PC-3 (cell line): ENCODE measurements at regions of chr21 and their contacts with region 1.

Region 1: GRCh38 chr21:33931799-33932390 is 16.3 kb upstream of the ATP5PO start:
- DNase-seq: peak; percentile 25
- ATAC-seq: peak; percentile 69
- H3K4me3 ChIP-seq: peak overlapping the region; percentile 88
- H3K27ac ChIP-seq: peak overlapping the region; percentile 86
- H3K4me1 ChIP-seq: peaks cover 13% of the 10 kb centered on the region
- H3K27me3 ChIP-seq: no peaks in the 10 kb centered on the region
- CTCF ChIP-seq: no peak

Region 2: DNA sequence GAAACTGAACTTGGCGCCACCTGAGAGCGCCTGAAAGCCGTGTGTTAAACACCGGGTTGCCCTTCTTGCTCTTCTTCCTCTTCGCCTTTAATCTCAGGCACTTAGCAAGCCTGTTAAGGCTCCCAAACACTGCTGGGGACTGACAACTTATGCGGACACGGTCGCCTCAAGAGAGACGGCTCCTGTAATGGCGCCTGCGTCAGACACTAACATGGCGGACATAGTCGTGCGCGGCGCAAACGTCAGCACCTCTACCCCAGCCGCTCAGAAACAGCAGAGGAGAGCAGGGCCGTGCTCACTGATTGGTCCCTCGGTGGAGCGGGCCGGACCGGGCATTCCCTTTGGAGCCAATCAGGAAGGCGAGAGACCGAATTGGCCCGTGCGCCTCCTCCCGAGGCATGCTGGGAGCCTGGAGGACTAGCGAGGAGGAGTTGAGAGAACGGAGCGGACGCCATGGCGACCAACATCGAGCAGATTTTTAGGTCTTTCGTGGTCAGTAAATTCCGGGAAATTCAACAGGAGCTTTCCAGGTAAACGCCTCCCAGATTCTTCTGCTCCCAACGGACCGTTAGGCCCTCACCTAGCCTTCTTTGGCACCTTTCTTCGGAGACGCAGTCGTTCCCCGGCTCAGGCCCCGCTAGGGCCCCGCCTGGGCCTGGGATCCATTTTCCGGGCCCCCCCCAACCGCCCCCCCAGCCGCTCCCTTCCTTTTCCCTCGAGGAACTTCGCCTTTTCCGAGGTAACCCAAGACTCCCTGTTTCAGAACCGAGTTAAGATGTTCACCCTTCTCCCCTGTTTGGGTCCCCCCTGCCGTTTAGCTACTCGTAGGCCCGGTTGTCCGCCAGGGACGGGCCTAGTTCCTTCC is 389.0 kb before region 1 on chr21 and contains the start of gene SON:
- CTCF ChIA-PET with region 1: no interaction called
- POLR2A ChIA-PET with region 1: no interaction called
- intact Hi-C with region 1: no loop called
- DNase-seq: peak; percentile 99
- ATAC-seq: peak; percentile 95
- H3K4me3 ChIP-seq: peak within 1 kb of the TSS; percentile 94
- H3K27ac ChIP-seq: peak within 1 kb of the TSS; percentile 98
- H3K4me1 ChIP-seq: peaks cover 22% of the 10 kb centered on the region
- H3K27me3 ChIP-seq: no peaks in the 10 kb centered on the region
- CTCF ChIP-seq: no peak
- total RNA-seq, gene SON: 180 and 373 TPM in 2 replicates

Region 3: DNA sequence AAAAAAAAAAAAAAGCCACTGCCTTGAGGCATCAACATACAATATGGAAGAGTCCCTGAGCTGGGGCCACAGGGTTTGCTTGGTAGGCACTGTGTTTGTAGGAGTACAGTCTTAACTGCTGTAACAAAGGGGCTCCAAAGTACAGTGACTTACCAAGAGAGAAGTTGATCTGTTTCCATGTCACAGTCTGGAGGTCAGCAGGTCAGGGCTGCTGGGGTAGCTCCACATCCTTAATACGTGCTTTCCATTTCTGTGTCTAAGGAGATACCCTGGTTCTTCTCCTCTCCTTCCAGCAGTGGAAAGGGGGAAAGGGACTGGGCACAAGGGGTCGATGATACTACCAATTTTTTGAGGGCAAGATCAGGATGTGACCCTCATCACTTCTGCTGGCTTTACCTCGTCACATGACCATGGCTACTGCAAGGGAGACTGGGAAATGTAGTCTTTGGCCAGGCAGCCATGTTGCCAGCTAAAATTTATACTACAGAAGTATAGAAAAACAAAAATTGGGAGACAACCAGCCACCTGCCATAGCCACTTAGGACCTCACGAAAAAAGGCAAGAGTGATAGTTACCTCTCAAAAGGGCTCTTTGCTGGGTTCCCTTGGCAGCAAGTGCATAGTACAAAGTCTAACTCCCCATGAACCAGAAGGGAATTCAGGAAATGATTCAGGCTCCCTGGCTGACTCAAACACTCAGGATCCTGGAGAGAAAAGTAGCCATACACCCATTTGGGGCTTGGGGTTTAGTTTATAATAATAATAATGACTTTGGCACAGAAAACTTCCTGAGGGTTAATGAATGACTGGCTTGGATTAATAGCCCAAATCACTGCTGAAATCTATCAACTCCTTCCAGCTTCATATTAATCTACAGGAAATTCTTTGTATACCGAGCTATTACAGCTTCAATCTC is 36.4 kb after region 1 on chr21:
- CTCF ChIA-PET with region 1: no interaction called
- POLR2A ChIA-PET with region 1: interaction called, 10 read pairs
- intact Hi-C with region 1: no loop called
- DNase-seq: peak; percentile 90
- ATAC-seq: peak; percentile 84
- H3K4me3 ChIP-seq: peak overlapping the region; percentile 36; the same call in 1 of the 2 replicates
- H3K27ac ChIP-seq: peak overlapping the region; percentile 91
- H3K4me1 ChIP-seq: peaks cover 46% of the 10 kb centered on the region
- H3K27me3 ChIP-seq: no peaks in the 10 kb centered on the region
- CTCF ChIP-seq: no peak